Activated T-helper 2 cell treated with anti-CD3 and anti-CD28 coated beads, Interferon-gamma antibody, Interleukin-2, Interleukin-4, amounts not matched to agents 10 μg/mL and 5 μg/mL and 100 μg/mL, durations not matched to agents 14 hours and 24 hours and 36 hours (primary cell): ENCODE measurements at regions of chr2 and their contacts with region 1.

Region 1: GRCh38 chr2:127410871-127411652 is 7.2 kb upstream of the PROC start:
- DNase-seq: no peak
- H3K4me3 Mint-ChIP-seq: peak overlapping the region; percentile 71
- H3K27ac Mint-ChIP-seq: peak overlapping the region; percentile 98
- H3K4me1 Mint-ChIP-seq: peaks cover 45% of the 10 kb centered on the region
- H3K27me3 Mint-ChIP-seq: no peaks in the 10 kb centered on the region

Region 2: GRCh38 chr2:127081826-127082633 is 329.0 kb before region 1 on chr2:
- intact Hi-C with region 1: loop called (anchors 5 kb)
- DNase-seq: peak; percentile 74
- H3K4me3 Mint-ChIP-seq: peak overlapping the region; percentile 76
- H3K27ac Mint-ChIP-seq: peak overlapping the region; percentile 90
- H3K4me1 Mint-ChIP-seq: peaks cover 63% of the 10 kb centered on the region
- H3K27me3 Mint-ChIP-seq: no peaks in the 10 kb centered on the region

Region 3: GRCh38 chr2:127355386-127356008 is 55.6 kb before region 1 on chr2:
- intact Hi-C with region 1: loop called (anchors 2 kb)
- DNase-seq: no peak
- H3K4me3 Mint-ChIP-seq: no peak overlapping the region
- H3K27ac Mint-ChIP-seq: no peak overlapping the region
- H3K4me1 Mint-ChIP-seq: peaks cover 33% of the 10 kb centered on the region
- H3K27me3 Mint-ChIP-seq: no peaks in the 10 kb centered on the region

Region 4: GRCh38 chr2:127422810-127423475 is 11.9 kb after region 1 on chr2:
- intact Hi-C with region 1: no loop called
- DNase-seq: no peak
- H3K4me3 Mint-ChIP-seq: peak overlapping the region; percentile 47
- H3K27ac Mint-ChIP-seq: no peak overlapping the region
- H3K4me1 Mint-ChIP-seq: peaks cover 5% of the 10 kb centered on the region
- H3K27me3 Mint-ChIP-seq: peaks cover 47% of the 10 kb centered on the region

Region 5: DNA sequence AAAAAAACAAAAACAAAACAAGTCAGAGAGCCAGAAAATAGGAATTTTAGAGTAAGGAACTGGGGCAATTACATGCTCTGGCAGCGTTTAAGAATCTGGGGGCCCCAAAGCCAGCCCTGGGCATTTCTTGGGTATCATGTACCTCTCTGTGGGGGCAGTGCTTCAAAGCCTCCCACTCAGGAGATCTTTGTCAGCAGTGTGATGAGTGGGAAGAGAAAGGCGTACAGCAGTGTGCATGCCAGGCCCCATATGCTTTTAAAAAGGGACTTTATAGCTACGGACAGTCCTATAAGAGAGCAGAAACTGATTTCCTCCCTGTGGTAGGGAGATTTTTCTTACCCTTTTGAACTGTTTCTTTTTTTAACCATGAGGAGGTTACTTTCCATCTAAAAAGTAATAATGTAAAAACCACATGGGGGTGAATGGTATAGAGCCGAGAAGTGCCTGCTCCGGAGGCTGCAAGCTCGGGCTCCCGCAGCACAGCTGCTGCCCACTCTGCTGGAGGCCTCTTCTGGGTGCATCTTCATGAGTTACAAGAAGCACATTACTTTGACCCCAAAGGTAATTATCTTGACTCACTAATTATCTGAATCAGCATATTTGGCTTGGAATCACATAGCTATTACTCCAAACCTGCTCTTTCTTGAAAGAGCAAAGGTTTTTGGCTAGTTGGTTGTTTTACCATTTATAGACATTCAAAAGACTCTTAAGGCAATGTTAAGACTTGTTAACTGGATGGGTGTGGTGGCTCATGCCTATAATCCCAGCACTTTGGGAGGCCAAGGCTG is 53.6 kb after region 1 on chr2:
- intact Hi-C with region 1: loop called (anchors 1 kb)
- DNase-seq: no peak
- H3K4me3 Mint-ChIP-seq: peak overlapping the region; percentile 26
- H3K27ac Mint-ChIP-seq: peak overlapping the region; percentile 86
- H3K4me1 Mint-ChIP-seq: peaks cover 53% of the 10 kb centered on the region
- H3K27me3 Mint-ChIP-seq: no peaks in the 10 kb centered on the region